Dendritic cell treated with granulocyte-macrophage colony-stimulating factor and Interleukin-4, amounts not matched to agents 40 ng/mL and 50 ng/mL, for 4 days (primary cell): ENCODE measurements at regions of chrX and their contacts with region 1.

Region 1: DNA sequence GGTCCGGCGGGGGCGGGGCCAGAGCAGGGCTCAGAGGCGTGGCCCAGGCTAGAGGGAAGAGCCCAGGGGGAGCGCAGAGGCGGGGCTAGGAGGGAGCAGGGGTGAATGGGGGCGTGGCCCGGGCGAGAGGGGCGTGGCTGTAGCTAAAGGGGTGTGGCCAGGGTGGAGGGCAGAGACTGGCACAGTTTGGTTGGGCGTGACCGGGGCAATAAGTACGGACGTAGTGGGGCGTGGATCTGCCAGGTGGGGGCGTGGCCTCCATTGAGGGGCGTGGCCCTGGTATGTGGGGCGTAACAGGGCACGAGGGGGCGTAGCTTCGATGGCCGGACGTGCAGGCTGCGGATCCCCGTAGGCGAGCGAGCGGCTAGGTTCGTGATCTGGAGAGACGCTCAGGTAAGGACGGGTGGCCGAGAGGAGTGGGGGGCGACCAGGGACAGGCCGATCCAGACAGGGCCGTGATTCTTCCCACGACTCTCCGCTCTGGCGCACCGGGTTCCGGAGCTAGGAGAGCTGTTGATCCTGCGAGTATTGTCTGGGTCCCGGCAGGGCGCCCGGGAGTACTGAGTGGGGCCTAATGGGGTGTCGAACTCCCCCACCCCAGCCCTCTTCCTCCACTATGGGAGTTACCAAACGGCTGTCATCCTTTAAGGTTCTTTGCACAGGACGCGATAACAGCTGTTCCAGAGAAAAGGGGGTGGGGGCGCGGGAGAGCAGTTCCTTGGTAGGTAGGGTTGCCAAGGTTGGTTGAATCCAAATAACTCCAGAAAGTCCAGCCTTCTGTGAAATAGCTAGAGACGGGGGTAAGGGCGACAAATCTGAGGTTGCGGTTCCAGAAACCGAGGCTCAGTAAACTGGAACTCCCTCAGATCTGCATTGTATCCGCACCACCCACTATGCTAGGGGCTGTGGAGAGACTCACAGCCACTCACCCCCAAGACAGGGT is at the start of gene CA5B:
- H3K4me3 Mint-ChIP-seq: peak within 1 kb of the TSS; percentile 87
- H3K27ac Mint-ChIP-seq: peak within 1 kb of the TSS; percentile 82
- H3K4me1 Mint-ChIP-seq: peaks cover 18% of the 10 kb centered on the region
- H3K27me3 Mint-ChIP-seq: no peaks in the 10 kb centered on the region

Region 2: DNA sequence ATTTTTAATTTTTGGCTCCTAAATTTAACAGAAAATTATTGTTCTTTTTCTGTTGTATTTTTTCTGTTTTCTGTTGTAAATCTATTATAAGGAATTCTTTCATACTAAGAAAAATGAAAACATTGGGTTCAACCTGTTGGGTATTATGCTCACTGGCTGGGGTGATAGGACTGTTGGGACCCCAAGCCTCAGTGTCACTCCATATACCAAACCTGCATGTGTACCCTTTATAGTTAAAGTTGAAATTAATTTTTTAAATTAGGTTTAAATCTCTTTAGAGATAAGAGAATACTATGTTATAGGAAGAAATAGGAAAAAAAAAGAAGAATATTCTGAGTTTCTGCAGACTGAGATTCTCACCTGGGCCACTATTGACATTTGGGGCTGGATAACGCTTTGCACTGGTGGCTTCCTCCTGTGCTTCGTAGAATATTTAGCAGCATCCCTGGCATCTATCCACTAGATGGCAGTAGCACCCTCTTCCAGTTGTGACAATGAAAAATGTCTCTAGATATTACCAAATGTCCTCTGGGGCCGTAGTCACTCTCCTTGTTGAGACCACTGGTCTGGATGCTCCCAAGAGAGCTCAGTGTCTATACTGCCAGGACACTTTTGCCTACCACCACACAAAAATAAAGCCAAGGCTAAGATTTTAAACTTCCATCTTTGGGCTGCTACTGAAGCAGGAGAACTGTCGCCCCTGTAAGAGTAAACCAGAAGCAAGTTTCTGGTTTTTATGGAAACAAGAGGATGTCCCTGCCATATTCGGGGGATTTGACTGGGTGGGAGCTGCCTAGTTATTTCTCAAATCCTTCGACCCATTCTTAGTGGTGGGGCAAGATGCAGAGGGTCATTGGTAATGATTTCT is 51.2 kb before region 1 on chrX:
- intact Hi-C with region 1: loop called (anchors 5 kb)
- H3K4me3 Mint-ChIP-seq: no peak overlapping the region
- H3K27ac Mint-ChIP-seq: no peak overlapping the region
- H3K4me1 Mint-ChIP-seq: peaks cover 16% of the 10 kb centered on the region
- H3K27me3 Mint-ChIP-seq: no peaks in the 10 kb centered on the region

Region 3: DNA sequence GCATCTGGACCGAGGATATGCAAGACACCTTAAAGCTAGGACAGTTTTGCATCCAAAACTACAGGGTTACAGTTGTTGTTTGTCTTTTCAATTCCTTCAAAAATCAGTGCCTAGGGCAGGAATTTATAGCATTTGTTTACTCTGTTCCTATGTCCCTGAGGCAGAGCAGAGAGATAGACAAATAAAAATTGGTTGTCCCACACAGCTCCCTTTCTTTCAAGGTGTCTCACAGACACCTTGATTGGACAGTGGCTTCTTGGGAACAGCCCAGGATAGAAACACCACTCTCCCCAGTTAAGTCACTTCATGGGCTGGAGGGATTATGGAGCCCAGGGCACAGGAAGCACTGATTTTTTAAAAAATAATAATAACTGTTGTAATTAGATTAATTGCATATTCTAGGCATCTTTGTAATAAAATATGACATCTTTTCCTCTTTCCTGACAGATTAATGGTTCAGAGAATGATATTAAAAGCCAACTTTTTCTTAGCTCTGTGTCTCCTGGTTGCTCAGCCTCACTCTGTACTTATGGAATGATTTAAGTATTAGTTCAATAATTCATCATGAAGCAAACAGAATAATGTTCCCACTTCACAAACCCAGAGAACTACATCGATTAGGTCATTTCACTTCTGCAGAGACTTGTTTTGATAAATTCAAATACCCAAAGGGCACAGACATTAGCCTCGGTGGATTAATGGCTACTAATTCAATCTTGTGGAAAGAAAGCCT is 437.3 kb after region 1 on chrX:
- intact Hi-C with region 1: no loop called
- H3K4me3 Mint-ChIP-seq: no peak overlapping the region
- H3K27ac Mint-ChIP-seq: no peak overlapping the region
- H3K4me1 Mint-ChIP-seq: peaks cover 4% of the 10 kb centered on the region
- H3K27me3 Mint-ChIP-seq: peaks cover 12% of the 10 kb centered on the region